Activated CD4-positive, alpha-beta T cell treated with anti-CD3 and anti-CD28 coated beads for 36 hours (primary cell): ENCODE measurements at regions of chr2 and their contacts with region 1.

Region 1: GRCh38 chr2:98412751-98413458 is 31.8 kb upstream of the INPP4A start:
- DNase-seq: peak; percentile 62
- ATAC-seq: peak; percentile 85
- H3K4me3 Mint-ChIP-seq: no peak overlapping the region
- H3K27ac Mint-ChIP-seq: no peak overlapping the region
- H3K4me1 Mint-ChIP-seq: peaks cover 14% of the 10 kb centered on the region
- H3K27me3 Mint-ChIP-seq: no peaks in the 10 kb centered on the region

Region 2: GRCh38 chr2:98438190-98439133 is 25.6 kb after region 1 on chr2:
- CTCF ChIA-PET with region 1: interaction called, 6 read pairs
- POLR2A ChIA-PET with region 1: no interaction called
- intact Hi-C with region 1: loop called in 1 of 2 experiments (anchors 2 kb)
- DNase-seq: no peak
- ATAC-seq: peak; percentile 95
- H3K4me3 Mint-ChIP-seq: no peak overlapping the region
- H3K27ac Mint-ChIP-seq: peak overlapping the region; percentile 71
- H3K4me1 Mint-ChIP-seq: peaks cover 21% of the 10 kb centered on the region
- H3K27me3 Mint-ChIP-seq: no peaks in the 10 kb centered on the region

Region 3: GRCh38 chr2:98518090-98518489 is 105.2 kb after region 1 on chr2:
- CTCF ChIA-PET with region 1: interaction called, 22 read pairs
- POLR2A ChIA-PET with region 1: no interaction called
- intact Hi-C with region 1: loop called (anchors 1 kb)
- DNase-seq: peak; percentile 72
- ATAC-seq: peak; percentile 75
- H3K4me3 Mint-ChIP-seq: no peak overlapping the region
- H3K27ac Mint-ChIP-seq: no peak overlapping the region
- H3K4me1 Mint-ChIP-seq: peaks cover 55% of the 10 kb centered on the region
- H3K27me3 Mint-ChIP-seq: no peaks in the 10 kb centered on the region

Region 4: GRCh38 chr2:98835831-98836385 is 423.0 kb after region 1 on chr2:
- CTCF ChIA-PET with region 1: no interaction called
- POLR2A ChIA-PET with region 1: no interaction called
- intact Hi-C with region 1: loop called (anchors 1 kb)
- DNase-seq: peak; percentile 57
- ATAC-seq: peak; percentile 78
- H3K4me3 Mint-ChIP-seq: no peak overlapping the region
- H3K27ac Mint-ChIP-seq: peak overlapping the region; percentile 79
- H3K4me1 Mint-ChIP-seq: peaks cover 29% of the 10 kb centered on the region
- H3K27me3 Mint-ChIP-seq: no peaks in the 10 kb centered on the region